IMR-90 (cell line): ENCODE measurements at regions of chr7 and their contacts with region 1.

Region 1: GRCh38 chr7:52920518-52920917 is 114.9 kb upstream of the POM121L12 start:
- DNase-seq: no peak
- ATAC-seq: no peak
- H3K4me3 ChIP-seq: no peak overlapping the region
- H3K27ac ChIP-seq: no peak overlapping the region
- H3K4me1 ChIP-seq: no peaks in the 10 kb centered on the region
- H3K27me3 ChIP-seq: no peaks in the 10 kb centered on the region
- CTCF ChIP-seq: no peak
- POLR2A ChIP-seq: no peak
- RAD21 ChIP-seq: no peak

Region 2: DNA sequence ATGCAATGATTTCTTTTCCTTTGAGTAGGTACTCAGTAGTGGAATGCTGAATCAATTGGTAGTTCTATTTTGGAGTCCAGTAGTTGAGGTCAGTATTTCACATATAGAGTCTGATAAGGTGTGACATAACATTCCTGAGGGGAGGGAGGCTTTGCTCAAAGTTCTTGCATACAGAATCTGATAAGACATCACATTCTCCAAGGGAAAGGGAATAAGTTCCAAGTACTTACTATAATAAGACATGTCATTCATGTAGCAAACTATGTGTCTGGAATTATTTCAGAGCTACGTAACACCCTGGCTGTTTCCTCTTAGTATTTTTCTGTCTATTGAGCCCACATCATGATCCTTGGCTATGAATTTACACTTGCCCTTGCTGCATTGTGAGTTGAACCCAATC is 40.6 kb after region 1 on chr7:
- CTCF ChIA-PET with region 1: no interaction called
- POLR2A ChIA-PET with region 1: no interaction called
- dilution Hi-C with region 1: no loop called
- in situ Hi-C with region 1: no loop called
- intact Hi-C with region 1: loop called (anchors 1 kb)
- DNase-seq: no peak
- ATAC-seq: no peak
- H3K4me3 ChIP-seq: no peak overlapping the region
- H3K27ac ChIP-seq: no peak overlapping the region
- H3K4me1 ChIP-seq: no peaks in the 10 kb centered on the region
- H3K27me3 ChIP-seq: no peaks in the 10 kb centered on the region
- CTCF ChIP-seq: no peak
- POLR2A ChIP-seq: no peak
- RAD21 ChIP-seq: no peak